ENCODE measurements at regions of chr19 and their contacts with region 1.

Region 1: GRCh38 chr19:48110350-48110966 is at the start of gene PLA2G4C:
- DNase-seq: peak; percentile 92 to 97 (median 92)
- ATAC-seq: peak; percentile 85
- H3K4me3 ChIP-seq: peak within 1 kb of the TSS; percentile 41
- H3K27ac ChIP-seq: peak within 1 kb of the TSS; percentile 54
- H3K4me1 ChIP-seq: peaks cover 8 to 13% of the 10 kb centered on the region in 2 experiments; a peak in 4 of 5 replicates
- H3K27me3 ChIP-seq: no peaks in the 10 kb centered on the region
- CTCF ChIP-seq: no peak
- EP300 ChIP-seq: no peak
- POLR2A ChIP-seq: peak; percentile 67
- RAD21 ChIP-seq: no peak
- polyA plus RNA-seq, gene PLA2G4C: not detected

Region 2: DNA sequence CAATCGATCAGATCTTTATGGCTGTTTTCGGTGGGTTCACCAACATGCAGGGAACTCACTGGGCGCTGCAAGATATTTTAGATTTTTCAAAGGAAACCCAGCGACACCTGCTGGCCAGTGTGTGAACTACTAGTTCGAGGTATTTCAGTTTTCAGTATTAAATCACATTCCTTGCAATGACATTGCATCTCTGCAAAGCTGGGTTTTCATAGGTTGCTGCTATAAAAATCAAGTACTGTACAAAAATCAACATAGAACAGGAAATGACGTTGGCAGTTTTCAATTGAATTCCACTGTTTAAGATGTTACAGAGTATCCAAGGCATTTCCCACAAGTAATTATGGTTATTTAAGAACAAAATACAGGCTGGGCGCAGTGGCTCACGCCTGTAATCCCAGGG is 42.1 kb after region 1 on chr19:
- CTCF ChIA-PET with region 1: interaction called, 14 read pairs
- POLR2A ChIA-PET with region 1: interaction called, 5 read pairs
- in situ Hi-C with region 1: no loop called
- intact Hi-C with region 1: loop called (anchors 1 kb)
- DNase-seq: peak; percentile 47 to 70 (median 56)
- ATAC-seq: peak; percentile 78
- H3K4me3 ChIP-seq: no peak overlapping the region
- H3K27ac ChIP-seq: no peak overlapping the region
- H3K4me1 ChIP-seq: no peaks in the 10 kb centered on the region; a peak in 1 of 5 replicates
- H3K27me3 ChIP-seq: no peaks in the 10 kb centered on the region
- CTCF ChIP-seq: peak; percentile 70 to 89 (median 74)
- EP300 ChIP-seq: no peak
- POLR2A ChIP-seq: no peak
- RAD21 ChIP-seq: peak; percentile 65 to 68

Region 3: DNA sequence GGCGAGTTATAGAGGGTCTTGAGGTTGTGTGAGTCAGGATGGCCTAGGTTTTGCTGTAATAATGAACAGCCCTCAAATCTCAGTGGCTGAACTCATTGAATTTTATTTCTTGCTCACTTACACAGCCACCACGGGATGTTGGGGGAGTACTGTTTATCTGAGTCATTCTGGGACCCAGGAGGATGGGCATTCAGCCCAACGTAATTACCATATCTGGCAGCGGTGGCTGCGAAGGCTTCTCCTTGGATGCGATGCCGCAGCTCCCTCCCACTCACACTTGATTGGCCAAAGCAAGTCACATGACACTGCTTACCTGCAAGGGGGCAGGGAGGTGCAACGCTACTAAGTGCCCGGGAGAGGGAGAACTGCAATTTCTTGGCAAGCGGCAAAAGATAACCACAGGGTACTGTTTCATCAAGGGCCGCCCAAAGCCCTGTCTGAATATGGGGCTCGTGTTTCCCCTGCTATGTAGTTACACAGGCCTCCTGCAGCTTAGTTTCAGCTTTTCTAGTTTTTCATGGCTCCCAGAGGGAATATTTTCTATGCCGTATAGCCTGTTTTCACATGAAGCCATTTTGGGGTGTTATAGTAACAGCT is 79.9 kb after region 1 on chr19:
- CTCF ChIA-PET with region 1: no interaction called
- POLR2A ChIA-PET with region 1: no interaction called
- in situ Hi-C with region 1: no loop called
- intact Hi-C with region 1: loop called (anchors 5 kb)
- DNase-seq: peak; percentile 84 to 94 (median 92)
- ATAC-seq: peak; percentile 97
- H3K4me3 ChIP-seq: no peak overlapping the region
- H3K27ac ChIP-seq: no peak overlapping the region
- H3K4me1 ChIP-seq: peaks cover 8 to 17% of the 10 kb centered on the region in 2 experiments; a peak in 4 of 5 replicates
- H3K27me3 ChIP-seq: no peaks in the 10 kb centered on the region
- CTCF ChIP-seq: peak; percentile 50 to 60 (median 57)
- EP300 ChIP-seq: no peak
- POLR2A ChIP-seq: no peak
- RAD21 ChIP-seq: no peak; a peak in 1 of 4 replicates

Measured in K562 (cell line).